Mammary epithelial cell (primary cell): ENCODE measurements at regions of chr15 and their contacts with region 1.

Region 1: GRCh38 chr15:84818261-84819131 is 1.3 kb downstream of the ALPK3 start:
- DNase-seq: no peak
- H3K4me3 ChIP-seq: no peak overlapping the region
- H3K27ac ChIP-seq: no peak overlapping the region
- H3K4me1 ChIP-seq: no peaks in the 10 kb centered on the region
- H3K27me3 ChIP-seq: no peaks in the 10 kb centered on the region
- CTCF ChIP-seq: no peak

Region 2: GRCh38 chr15:84773716-84774115 is 44.8 kb before region 1 on chr15:
- CTCF ChIA-PET with region 1: no interaction called
- dilution Hi-C with region 1: loop called (anchors 5 kb)
- in situ Hi-C with region 1: no loop called
- intact Hi-C with region 1: no loop called
- DNase-seq: no peak
- H3K4me3 ChIP-seq: no peak overlapping the region
- H3K27ac ChIP-seq: no peak overlapping the region
- H3K4me1 ChIP-seq: no peaks in the 10 kb centered on the region
- H3K27me3 ChIP-seq: no peaks in the 10 kb centered on the region
- CTCF ChIP-seq: no peak

Region 3: DNA sequence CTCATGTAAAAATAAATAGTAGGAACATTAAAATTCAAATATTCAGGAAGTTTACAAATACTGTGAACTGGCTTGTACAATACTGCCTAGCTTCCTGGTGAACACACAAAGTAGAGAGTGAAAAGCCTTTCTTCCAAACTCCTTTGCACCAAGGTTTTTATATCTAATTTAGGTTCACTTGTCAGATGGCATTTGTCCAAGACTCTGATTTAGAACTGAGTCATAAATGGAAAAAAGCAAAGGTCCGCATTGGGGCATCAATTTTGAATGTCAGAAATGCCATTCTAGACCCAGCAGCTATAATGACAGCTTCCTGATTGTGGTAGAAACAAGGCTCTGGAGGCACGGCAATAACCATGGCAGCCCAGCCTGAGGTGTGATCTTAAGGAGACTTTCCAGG is 323.8 kb after region 1 on chr15:
- CTCF ChIA-PET with region 1: no interaction called
- dilution Hi-C with region 1: no loop called
- in situ Hi-C with region 1: no loop called
- intact Hi-C with region 1: no loop called
- DNase-seq: peak; percentile 63
- H3K4me3 ChIP-seq: no peak overlapping the region
- H3K27ac ChIP-seq: no peak overlapping the region
- H3K4me1 ChIP-seq: peaks cover 6% of the 10 kb centered on the region
- H3K27me3 ChIP-seq: no peaks in the 10 kb centered on the region
- CTCF ChIP-seq: no peak

Region 4: DNA sequence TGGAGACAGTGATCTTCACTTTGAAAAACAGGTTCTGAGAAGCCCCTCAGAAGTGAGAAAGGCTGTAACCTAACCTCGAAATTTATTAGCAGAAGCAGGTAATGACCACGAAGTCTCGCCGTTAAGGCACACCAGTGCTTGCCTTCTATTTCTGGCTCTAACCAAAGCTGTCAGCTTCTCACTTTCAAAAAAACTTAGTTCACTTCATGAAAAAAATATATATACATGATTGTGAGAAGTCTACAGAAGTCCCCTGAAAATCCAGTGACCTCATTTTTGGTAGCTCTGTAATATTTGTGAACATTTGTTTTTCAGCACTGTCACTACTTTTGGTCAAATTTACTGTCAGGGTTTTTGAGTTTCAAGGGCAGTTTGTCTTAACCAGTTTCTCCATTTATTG is 542.8 kb after region 1 on chr15:
- CTCF ChIA-PET with region 1: no interaction called
- dilution Hi-C with region 1: no loop called
- in situ Hi-C with region 1: no loop called
- intact Hi-C with region 1: no loop called
- DNase-seq: no peak
- H3K4me3 ChIP-seq: no peak overlapping the region
- H3K27ac ChIP-seq: no peak overlapping the region
- H3K4me1 ChIP-seq: peaks cover 17% of the 10 kb centered on the region
- H3K27me3 ChIP-seq: no peaks in the 10 kb centered on the region
- CTCF ChIP-seq: no peak